Psoas muscle (tissue), 8 donors: ENCODE measurements at regions of chr1 and their contacts with region 1.

Region 1: GRCh38 chr1:26853156-26853555 is 9.8 kb upstream of the SFN start:
- DNase-seq: peak; percentile 87 to 93
- ATAC-seq: peak; percentile 92 to 98 (median 96)
- H3K4me3 ChIP-seq: no peak overlapping the region
- H3K27ac ChIP-seq: peak overlapping the region; percentile 43
- H3K4me1 ChIP-seq: no peaks in the 10 kb centered on the region
- H3K27me3 ChIP-seq: no peaks in the 10 kb centered on the region
- CTCF ChIP-seq: peak; percentile 83

Region 2: DNA sequence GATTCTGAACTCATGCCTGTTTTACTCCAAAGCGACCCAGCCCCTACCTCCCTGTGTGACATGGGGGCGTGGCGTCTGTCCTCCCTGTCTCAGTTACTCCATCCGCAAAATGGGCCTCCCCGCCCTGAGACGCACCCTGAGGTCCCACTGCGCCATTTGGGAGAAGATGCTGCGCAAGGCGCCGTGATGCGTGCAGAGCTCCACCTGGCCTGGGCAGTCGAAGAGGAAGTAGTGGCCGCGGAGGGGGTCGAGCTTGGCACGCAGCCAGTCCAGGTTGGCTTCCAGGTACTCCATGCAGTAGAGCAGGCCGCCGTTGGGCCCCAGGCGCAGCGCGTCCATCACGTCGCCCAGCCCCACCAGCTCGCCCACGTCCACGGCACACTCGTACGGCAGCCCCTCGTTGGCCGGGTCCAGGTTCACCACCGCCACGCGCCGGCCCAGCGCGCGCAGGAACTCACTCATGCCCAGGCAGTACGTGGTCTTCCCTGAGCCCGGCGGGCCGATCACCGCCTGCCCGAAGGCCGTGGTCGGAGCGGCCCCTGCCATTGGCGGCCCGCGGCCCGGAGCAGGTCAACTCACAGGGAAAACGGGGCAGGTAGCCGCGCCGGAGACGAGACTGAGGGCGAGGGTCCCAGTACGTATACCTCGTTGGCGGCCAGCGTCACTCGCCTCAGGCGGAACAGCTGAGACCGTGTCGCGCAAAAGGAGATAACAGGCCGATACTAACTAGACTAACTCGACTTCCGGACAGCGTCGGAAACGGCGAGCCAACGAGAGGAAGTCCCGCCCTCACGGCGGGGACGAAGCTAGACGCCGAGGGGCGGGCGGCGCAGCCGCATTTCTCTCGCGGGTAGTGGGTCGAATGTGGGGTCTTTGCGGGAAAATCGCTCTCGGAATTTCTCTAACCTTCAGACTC is 36.7 kb after region 1 on chr1 and contains the start of gene GPN2:
- intact Hi-C with region 1: loop called in 1 of 2 experiments (anchors 5 kb)
- DNase-seq: peak; percentile 78 to 88
- ATAC-seq: peak; percentile 91 to 96 (median 94)
- H3K4me3 ChIP-seq: peak within 1 kb of the TSS; percentile 96
- H3K27ac ChIP-seq: peak within 1 kb of the TSS; percentile 94
- H3K4me1 ChIP-seq: peaks cover 14% of the 10 kb centered on the region
- H3K27me3 ChIP-seq: no peaks in the 10 kb centered on the region
- CTCF ChIP-seq: no peak
- total RNA-seq, gene GPN2: 18.3 to 35.9 (median 25.6) TPM